ENCODE measurements at regions of chr9 and their contacts with region 1.

Region 1: GRCh38 chr9:35116898-35117551 is 1.4 kb upstream of the ATOSB start:
- DNase-seq: peak; percentile 77 to 96 (median 84)
- ATAC-seq: peak; percentile 67
- H3K4me3 ChIP-seq: peak overlapping the region; percentile 66
- H3K4me3 Mint-ChIP-seq: peak overlapping the region; percentile 94
- H3K27ac ChIP-seq: peak overlapping the region; percentile 81 to 83
- H3K27ac Mint-ChIP-seq: peak overlapping the region; percentile 79
- H3K4me1 ChIP-seq: peaks cover 46% of the 10 kb centered on the region
- H3K4me1 Mint-ChIP-seq: peaks cover 42% of the 10 kb centered on the region
- H3K27me3 ChIP-seq: no peaks in the 10 kb centered on the region
- H3K27me3 Mint-ChIP-seq: no peaks in the 10 kb centered on the region
- CTCF ChIP-seq: peak; percentile 90

Region 2: GRCh38 chr9:34701023-34701768 is 415.8 kb before region 1 on chr9:
- CTCF ChIA-PET with region 1: no interaction called
- POLR2A ChIA-PET with region 1: no interaction called
- intact Hi-C with region 1: no loop called
- DNase-seq: peak; percentile 57 to 85 (median 70)
- ATAC-seq: peak; percentile 90
- H3K4me3 ChIP-seq: peak overlapping the region; percentile 54
- H3K4me3 Mint-ChIP-seq: peak overlapping the region; percentile 66
- H3K27ac ChIP-seq: no peak overlapping the region
- H3K27ac Mint-ChIP-seq: no peak overlapping the region
- H3K4me1 ChIP-seq: peaks cover 12% of the 10 kb centered on the region
- H3K4me1 Mint-ChIP-seq: peaks cover 14% of the 10 kb centered on the region
- H3K27me3 ChIP-seq: no peaks in the 10 kb centered on the region
- H3K27me3 Mint-ChIP-seq: peaks cover 8% of the 10 kb centered on the region
- CTCF ChIP-seq: peak; percentile 87

Region 3: DNA sequence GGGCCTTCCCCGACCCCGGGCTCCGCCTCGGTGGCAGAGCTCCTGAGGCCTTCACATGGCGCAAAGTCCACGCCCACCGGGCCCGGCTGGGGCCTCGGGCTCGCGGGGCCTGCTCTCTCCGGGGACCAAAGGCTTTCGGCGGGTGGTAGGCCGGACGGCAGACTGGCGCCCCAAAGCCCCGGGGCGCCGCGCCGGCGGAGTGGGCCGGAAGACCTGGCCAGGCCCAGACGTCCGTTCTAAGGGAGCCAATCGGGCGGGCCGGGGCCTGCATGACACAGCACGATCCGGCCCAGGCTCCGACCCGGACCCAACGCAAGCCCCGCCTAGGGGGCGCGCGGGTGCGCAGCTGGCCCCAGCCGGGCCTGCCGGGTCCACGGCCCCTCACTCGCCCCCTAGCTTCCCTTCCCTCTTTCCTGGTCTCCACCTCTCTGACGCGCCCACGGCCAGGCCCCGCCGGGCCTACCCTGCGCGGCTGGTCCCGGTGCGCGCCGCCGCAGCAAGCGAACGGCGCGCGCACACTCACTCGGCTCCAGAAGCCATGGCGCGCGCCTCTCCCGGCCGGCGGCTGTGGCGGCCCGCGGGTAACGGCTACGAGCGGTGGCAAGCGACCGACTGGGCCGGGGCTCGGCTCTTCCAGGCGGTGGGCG is 45.1 kb before region 1 on chr9:
- CTCF ChIA-PET with region 1: interaction called, 14 read pairs
- POLR2A ChIA-PET with region 1: interaction called, 25 read pairs
- intact Hi-C with region 1: loop called in 1 of 2 experiments (anchors 5 kb)
- DNase-seq: peak; percentile 42 to 87 (median 59)
- ATAC-seq: peak; percentile 45
- H3K4me3 ChIP-seq: peak overlapping the region; percentile 69
- H3K4me3 Mint-ChIP-seq: peak overlapping the region; percentile 85
- H3K27ac ChIP-seq: peak overlapping the region; percentile 92 to 96
- H3K27ac Mint-ChIP-seq: peak overlapping the region; percentile 87
- H3K4me1 ChIP-seq: peaks cover 42% of the 10 kb centered on the region
- H3K4me1 Mint-ChIP-seq: peaks cover 56% of the 10 kb centered on the region
- H3K27me3 ChIP-seq: no peaks in the 10 kb centered on the region
- H3K27me3 Mint-ChIP-seq: no peaks in the 10 kb centered on the region
- CTCF ChIP-seq: peak; percentile 35

Region 4: GRCh38 chr9:35102926-35103659 is 13.9 kb before region 1 on chr9 and contains the start of gene STOML2:
- CTCF ChIA-PET with region 1: interaction called, 28 read pairs
- POLR2A ChIA-PET with region 1: interaction called, 46 read pairs
- intact Hi-C with region 1: loop called in 1 of 2 experiments (anchors 1 kb)
- DNase-seq: peak; percentile 84 to 97 (median 90)
- ATAC-seq: peak; percentile 98
- H3K4me3 ChIP-seq: peak within 1 kb of the TSS; percentile 99
- H3K4me3 Mint-ChIP-seq: peak within 1 kb of the TSS; percentile 92
- H3K27ac ChIP-seq: peak within 1 kb of the TSS; percentile 77 to 94
- H3K27ac Mint-ChIP-seq: peak within 1 kb of the TSS; percentile 89
- H3K4me1 ChIP-seq: peaks cover 28% of the 10 kb centered on the region
- H3K4me1 Mint-ChIP-seq: peaks cover 36% of the 10 kb centered on the region
- H3K27me3 ChIP-seq: no peaks in the 10 kb centered on the region
- H3K27me3 Mint-ChIP-seq: no peaks in the 10 kb centered on the region
- CTCF ChIP-seq: no peak
- total RNA-seq, gene STOML2: 29.8 to 30.5 TPM

Region 5: GRCh38 chr9:35481347-35481975 is 364.4 kb after region 1 on chr9:
- CTCF ChIA-PET with region 1: interaction called, 4 read pairs
- POLR2A ChIA-PET with region 1: interaction called, 7 read pairs
- intact Hi-C with region 1: loop called (anchors 1 kb)
- DNase-seq: peak in 5 of 14 experiments; percentile 11 to 46 (median 25)
- ATAC-seq: peak; percentile 63
- H3K4me3 ChIP-seq: no peak overlapping the region
- H3K4me3 Mint-ChIP-seq: no peak overlapping the region
- H3K27ac ChIP-seq: no peak overlapping the region
- H3K27ac Mint-ChIP-seq: no peak overlapping the region
- H3K4me1 ChIP-seq: no peaks in the 10 kb centered on the region
- H3K4me1 Mint-ChIP-seq: no peaks in the 10 kb centered on the region
- H3K27me3 ChIP-seq: peaks cover 5 to 8% of the 10 kb centered on the region in 2 experiments
- H3K27me3 Mint-ChIP-seq: peaks cover 15% of the 10 kb centered on the region
- CTCF ChIP-seq: peak; percentile 31

Region 6: GRCh38 chr9:35814841-35815543 is 698.0 kb after region 1 on chr9 and contains the start of gene HINT2:
- CTCF ChIA-PET with region 1: no interaction called
- POLR2A ChIA-PET with region 1: no interaction called
- intact Hi-C with region 1: loop called (anchors 5 to 10 kb)
- DNase-seq: peak; percentile 93 to 99 (median 96)
- ATAC-seq: peak; percentile 79
- H3K4me3 ChIP-seq: peak within 1 kb of the TSS; percentile 80
- H3K4me3 Mint-ChIP-seq: peak within 1 kb of the TSS; percentile 91
- H3K27ac ChIP-seq: peak within 1 kb of the TSS; percentile 68 to 87
- H3K27ac Mint-ChIP-seq: peak within 1 kb of the TSS; percentile 91
- H3K4me1 ChIP-seq: peaks cover 42% of the 10 kb centered on the region
- H3K4me1 Mint-ChIP-seq: peaks cover 43% of the 10 kb centered on the region
- H3K27me3 ChIP-seq: no peaks in the 10 kb centered on the region
- H3K27me3 Mint-ChIP-seq: no peaks in the 10 kb centered on the region
- CTCF ChIP-seq: no peak
- total RNA-seq, gene HINT2: 10.9 to 12.6 TPM

Measured in CD4-positive, alpha-beta T cell (primary cell).